Posterior vena cava (tissue), 2 donors: ENCODE measurements at regions of chr18 and their contacts with region 1.

Region 1: GRCh38 chr18:57621246-57621604 is 411 bp downstream of the NARS1 start:
- DNase-seq: no peak

Region 2: GRCh38 chr18:57589161-57589560 is 32.1 kb before region 1 on chr18:
- intact Hi-C with region 1: loop called in 1 of 2 experiments (anchors 1 kb)
- DNase-seq: no peak

Region 3: DNA sequence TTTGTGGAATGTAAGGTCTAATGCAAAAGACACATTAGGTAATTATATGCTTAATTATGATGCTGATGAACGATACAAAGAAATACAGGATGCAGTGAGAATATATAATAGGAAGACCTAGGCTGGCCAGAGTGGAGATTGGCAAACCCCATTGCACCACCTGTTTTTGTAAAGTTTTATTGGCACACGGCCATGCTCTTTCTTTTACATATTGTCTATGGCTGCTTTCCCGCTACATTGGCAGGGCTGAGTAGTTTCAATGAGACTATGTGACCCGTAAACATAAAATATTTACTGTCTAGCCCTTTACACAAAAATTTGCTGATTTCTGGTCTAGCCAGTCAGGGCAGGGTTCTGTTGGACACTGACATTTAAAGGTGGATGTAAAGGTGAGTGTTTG is 1523.8 kb after region 1 on chr18:
- intact Hi-C with region 1: loop called in 1 of 2 experiments (anchors 5 kb)
- DNase-seq: no peak